PC-3 (cell line): ENCODE measurements at regions of chr12 and their contacts with region 1.

Region 1: DNA sequence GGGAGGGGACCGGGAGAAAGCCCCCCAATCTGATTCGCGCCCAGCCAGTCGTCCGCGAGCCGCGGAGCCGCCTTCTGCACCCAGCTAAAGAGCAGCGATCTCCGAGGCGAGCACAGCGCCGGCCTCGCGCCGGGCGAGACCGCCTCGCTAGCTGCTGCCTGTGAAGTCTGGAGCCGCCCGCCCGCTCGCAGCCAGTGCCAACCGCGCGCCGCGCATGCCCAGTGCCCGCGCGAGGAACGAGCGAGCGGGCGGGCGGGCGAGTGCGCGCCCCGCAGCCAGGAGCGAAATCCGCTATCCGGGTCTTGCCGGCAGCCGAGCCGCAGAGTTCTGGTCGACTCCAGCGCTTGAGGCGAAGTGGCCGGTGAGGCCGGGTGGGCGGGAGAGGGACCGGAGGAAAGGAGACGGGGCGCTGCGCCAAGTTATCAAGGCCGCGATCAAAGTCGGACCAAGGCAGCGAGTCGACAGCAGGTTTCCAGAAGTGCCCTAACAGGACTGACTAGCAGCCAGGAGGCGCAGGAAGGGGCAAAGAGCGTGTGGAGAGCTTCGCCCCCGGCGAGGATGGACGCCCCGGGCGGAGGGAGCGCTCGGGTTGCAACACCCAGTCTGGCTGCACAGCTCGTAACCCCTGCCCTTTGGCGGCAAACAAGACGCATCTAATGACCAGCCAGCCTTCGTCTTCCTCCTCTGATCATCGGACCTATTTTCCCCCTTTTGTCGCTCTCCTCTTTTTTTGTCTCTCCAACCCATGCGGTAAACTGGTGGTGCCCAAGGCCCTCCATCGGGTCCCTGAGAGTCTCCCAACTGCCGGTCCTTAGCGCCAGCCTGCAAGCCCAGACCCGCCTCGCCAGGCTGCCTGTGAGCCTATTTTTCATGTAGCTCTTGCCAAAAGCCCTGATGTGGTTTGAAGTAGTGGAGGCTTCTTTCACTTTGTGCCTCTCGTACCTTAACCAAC is at the start of gene EPS8:
- DNase-seq: peak; percentile 88
- ATAC-seq: peak; percentile 78
- H3K4me3 ChIP-seq: peak within 1 kb of the TSS; percentile 85
- H3K27ac ChIP-seq: peak within 1 kb of the TSS; percentile 79
- H3K4me1 ChIP-seq: peaks cover 18% of the 10 kb centered on the region
- H3K27me3 ChIP-seq: no peaks in the 10 kb centered on the region
- CTCF ChIP-seq: no peak
- total RNA-seq, gene EPS8: 37.8 and 47.4 TPM in 2 replicates

Region 2: GRCh38 chr12:15700595-15700994 is 88.9 kb before region 1 on chr12:
- CTCF ChIA-PET with region 1: no interaction called
- POLR2A ChIA-PET with region 1: no interaction called
- intact Hi-C with region 1: loop called (anchors 2 kb)
- DNase-seq: peak; percentile 79
- ATAC-seq: peak; percentile 78
- H3K4me3 ChIP-seq: no peak overlapping the region
- H3K27ac ChIP-seq: peak overlapping the region; percentile 86
- H3K4me1 ChIP-seq: peaks cover 33% of the 10 kb centered on the region
- H3K27me3 ChIP-seq: no peaks in the 10 kb centered on the region
- CTCF ChIP-seq: no peak

Region 3: DNA sequence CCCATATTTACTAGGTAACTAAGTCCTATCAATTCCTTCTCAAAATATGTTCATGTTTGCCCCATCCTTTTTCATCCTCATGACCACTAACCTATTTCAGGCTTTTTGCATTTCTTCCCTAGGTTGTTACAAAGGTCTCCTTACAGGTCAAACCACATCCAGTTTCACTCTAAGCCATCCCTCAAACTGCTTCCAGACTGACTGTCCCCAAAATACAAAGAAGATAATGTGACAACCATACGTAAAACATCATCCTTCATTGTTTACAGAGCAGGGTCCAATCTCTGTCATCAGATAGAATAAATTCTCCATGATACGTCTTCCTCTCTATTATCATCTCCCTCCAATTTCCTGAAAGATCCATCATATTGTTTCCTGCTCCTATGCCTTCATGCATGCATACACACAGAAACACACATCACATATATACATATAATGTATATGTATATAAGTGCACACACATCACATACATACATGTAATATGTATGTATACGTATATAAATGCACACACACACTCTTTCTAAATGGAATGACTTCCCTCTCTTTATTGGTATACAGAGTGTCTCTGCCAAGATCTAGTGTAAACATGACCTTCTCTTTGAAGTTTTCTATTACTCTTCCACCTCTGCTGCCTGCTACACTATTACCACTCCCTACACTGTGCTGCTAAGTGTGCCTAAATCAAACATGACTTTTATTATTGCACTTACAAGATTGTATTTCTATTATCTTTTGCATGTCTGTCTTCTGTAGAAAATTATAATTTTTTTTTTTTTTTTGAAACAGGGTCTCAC is 30.3 kb after region 1 on chr12:
- CTCF ChIA-PET with region 1: no interaction called
- POLR2A ChIA-PET with region 1: no interaction called
- intact Hi-C with region 1: loop called (anchors 2 kb)
- DNase-seq: no peak
- ATAC-seq: no peak
- H3K4me3 ChIP-seq: no peak overlapping the region
- H3K27ac ChIP-seq: no peak overlapping the region
- H3K4me1 ChIP-seq: peaks cover 22% of the 10 kb centered on the region
- H3K27me3 ChIP-seq: no peaks in the 10 kb centered on the region
- CTCF ChIP-seq: no peak

Region 4: GRCh38 chr12:15899282-15899870 is 109.9 kb after region 1 on chr12:
- CTCF ChIA-PET with region 1: no interaction called
- POLR2A ChIA-PET with region 1: no interaction called
- intact Hi-C with region 1: no loop called
- DNase-seq: peak; percentile 25
- ATAC-seq: no peak
- H3K4me3 ChIP-seq: no peak overlapping the region
- H3K27ac ChIP-seq: no peak overlapping the region
- H3K4me1 ChIP-seq: no peaks in the 10 kb centered on the region
- H3K27me3 ChIP-seq: no peaks in the 10 kb centered on the region
- CTCF ChIP-seq: peak; percentile 78